ENCODE measurements at regions of chr19 and their contacts with region 1.

Region 1: GRCh38 chr19:52570000-52570861 is at the start of gene ZNF701:
- DNase-seq: peak; percentile 92 to 98 (median 95)
- ATAC-seq: peak; percentile 97
- H3K4me3 ChIP-seq: peak within 1 kb of the TSS; percentile 93
- H3K4me3 Mint-ChIP-seq: peak within 1 kb of the TSS; percentile 87
- H3K27ac ChIP-seq: peak within 1 kb of the TSS; percentile 77 to 87
- H3K27ac Mint-ChIP-seq: peak within 1 kb of the TSS; percentile 84
- H3K4me1 ChIP-seq: peaks cover 20% of the 10 kb centered on the region
- H3K4me1 Mint-ChIP-seq: peaks cover 37% of the 10 kb centered on the region
- H3K27me3 ChIP-seq: no peaks in the 10 kb centered on the region
- H3K27me3 Mint-ChIP-seq: no peaks in the 10 kb centered on the region
- CTCF ChIP-seq: peak; percentile 36
- total RNA-seq, gene ZNF701: 7.9 to 8.2 TPM

Region 2: DNA sequence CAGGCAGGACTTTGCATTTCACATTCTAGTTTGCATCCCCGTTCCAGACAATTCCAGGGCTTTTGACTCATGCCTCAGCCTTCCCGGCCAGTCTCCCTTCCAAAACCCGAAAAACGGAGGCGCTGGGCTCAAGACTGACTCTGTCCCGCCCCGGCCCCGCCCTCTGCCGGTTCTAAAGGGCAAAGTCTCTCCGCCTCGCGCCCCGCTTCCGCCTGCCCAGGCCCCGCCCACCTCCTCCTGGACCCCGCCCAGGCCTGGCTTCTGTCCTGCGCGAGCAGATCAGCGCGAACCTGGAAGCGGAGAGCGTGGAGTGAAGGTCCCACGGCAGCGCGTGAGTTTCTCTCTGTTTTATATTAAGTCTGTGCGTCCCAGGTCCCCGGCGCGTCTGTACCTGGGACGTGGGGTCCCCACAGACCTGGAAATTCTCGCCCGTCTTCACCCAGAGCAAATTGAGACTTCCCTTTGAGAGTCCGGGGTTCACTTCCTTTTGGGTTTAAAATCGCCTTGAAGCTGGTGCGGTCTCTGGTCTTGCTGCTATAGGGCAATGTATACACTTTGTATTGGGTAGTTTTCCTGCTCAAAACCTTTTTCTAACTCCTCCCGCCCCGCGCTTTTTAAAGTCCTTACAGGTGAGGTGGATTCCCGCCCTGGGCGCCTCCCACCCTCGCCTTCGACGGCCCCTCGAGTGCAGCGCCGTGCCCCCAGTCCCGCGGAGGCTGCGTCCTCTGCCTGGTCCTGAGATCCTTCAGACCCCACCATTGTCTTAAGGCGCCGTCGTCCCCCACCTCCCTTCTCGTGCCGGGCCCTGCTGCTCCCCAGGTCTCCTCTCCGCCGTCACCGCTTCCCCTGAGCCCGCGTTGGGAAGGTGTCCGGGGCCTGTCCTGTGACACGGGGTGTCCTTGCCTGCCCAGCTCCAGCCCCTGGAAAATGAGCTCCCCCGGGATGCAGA is 31.1 kb after region 1 on chr19:
- CTCF ChIA-PET with region 1: no interaction called
- POLR2A ChIA-PET with region 1: no interaction called
- intact Hi-C with region 1: loop called (anchors 1 to 2 kb)
- DNase-seq: peak; percentile 87 to 97 (median 93)
- ATAC-seq: peak; percentile 99
- H3K4me3 ChIP-seq: peak overlapping the region; percentile 94
- H3K4me3 Mint-ChIP-seq: peak overlapping the region; percentile 89
- H3K27ac ChIP-seq: peak overlapping the region; percentile 35 to 68
- H3K27ac Mint-ChIP-seq: peak overlapping the region; percentile 86
- H3K4me1 ChIP-seq: peaks cover 26% of the 10 kb centered on the region
- H3K4me1 Mint-ChIP-seq: peaks cover 45% of the 10 kb centered on the region
- H3K27me3 ChIP-seq: no peaks in the 10 kb centered on the region
- H3K27me3 Mint-ChIP-seq: no peaks in the 10 kb centered on the region
- CTCF ChIP-seq: peak; percentile 66

Region 3: DNA sequence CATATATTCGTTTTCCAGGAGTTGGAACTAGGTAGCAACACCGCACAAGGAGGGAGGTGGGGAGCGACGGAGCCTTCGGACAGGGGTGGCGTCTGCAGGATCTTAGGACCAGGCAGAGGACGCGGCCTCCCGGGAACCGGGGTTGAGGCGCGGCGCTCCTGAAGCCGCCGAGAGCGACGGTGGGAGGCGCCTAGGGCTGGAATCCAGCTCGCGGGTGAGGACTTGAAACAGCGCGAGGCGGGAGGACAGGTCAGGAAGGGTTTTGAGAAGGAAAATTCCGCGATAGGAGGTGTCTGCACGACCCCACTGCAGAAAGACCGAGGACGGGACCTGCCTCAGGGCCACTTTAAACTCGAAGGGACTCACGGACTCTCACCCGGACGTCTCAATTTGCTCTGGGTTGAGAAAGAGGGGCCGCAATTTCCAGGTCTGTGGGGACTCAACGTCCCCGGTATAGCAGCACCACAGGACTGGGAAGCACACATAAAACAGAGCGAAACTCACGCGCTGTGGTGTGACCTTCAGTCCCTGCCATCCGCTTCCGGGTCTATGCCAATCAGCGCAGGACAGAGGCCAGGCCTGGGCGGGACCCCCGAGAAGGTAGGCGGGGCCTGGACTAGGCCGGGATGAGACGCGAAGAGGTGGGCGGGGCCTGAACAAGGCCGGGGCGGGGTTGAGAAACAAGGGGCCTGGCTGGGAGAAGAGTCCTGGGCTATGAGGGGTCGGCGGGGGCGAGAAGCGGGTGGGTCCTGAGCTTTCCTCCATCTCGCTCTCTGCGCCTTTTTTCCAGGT is 327.1 kb after region 1 on chr19 and contains the start of gene ZNF320:
- CTCF ChIA-PET with region 1: no interaction called
- POLR2A ChIA-PET with region 1: no interaction called
- intact Hi-C with region 1: no loop called
- DNase-seq: peak; percentile 77 to 95 (median 86)
- ATAC-seq: peak; percentile 100
- H3K4me3 ChIP-seq: peak within 1 kb of the TSS; percentile 73
- H3K4me3 Mint-ChIP-seq: peak within 1 kb of the TSS; percentile 93
- H3K27ac ChIP-seq: peak within 1 kb of the TSS; percentile 14 to 77
- H3K27ac Mint-ChIP-seq: peak within 1 kb of the TSS; percentile 87
- H3K4me1 ChIP-seq: peaks cover 16% of the 10 kb centered on the region
- H3K4me1 Mint-ChIP-seq: peaks cover 36% of the 10 kb centered on the region
- H3K27me3 ChIP-seq: no peaks in the 10 kb centered on the region
- H3K27me3 Mint-ChIP-seq: no peaks in the 10 kb centered on the region
- CTCF ChIP-seq: no peak
- total RNA-seq, gene ZNF320: 7.2 to 7.4 TPM